ENCODE measurements at regions of chr5 and their contacts with region 1.

Region 1: GRCh38 chr5:171342362-171343111 is 33.5 kb downstream of the TLX3 start:
- DNase-seq: peak; percentile 36
- H3K4me3 Mint-ChIP-seq: no peak overlapping the region
- H3K27ac Mint-ChIP-seq: no peak overlapping the region
- H3K4me1 Mint-ChIP-seq: no peaks in the 10 kb centered on the region
- H3K27me3 Mint-ChIP-seq: peaks cover 16% of the 10 kb centered on the region

Region 2: GRCh38 chr5:171207256-171207847 is 135.2 kb before region 1 on chr5:
- CTCF ChIA-PET with region 1: interaction called, 54 read pairs
- POLR2A ChIA-PET with region 1: no interaction called
- DNase-seq: no peak
- H3K4me3 Mint-ChIP-seq: no peak overlapping the region
- H3K27ac Mint-ChIP-seq: no peak overlapping the region
- H3K4me1 Mint-ChIP-seq: no peaks in the 10 kb centered on the region
- H3K27me3 Mint-ChIP-seq: peaks cover 24% of the 10 kb centered on the region